Heart left ventricle (tissue), 16 donors: ENCODE measurements at regions of chr2 and their contacts with region 1.

Region 1: GRCh38 chr2:27370026-27370815 is at the starts of genes EIF2B4 and SNX17:
- DNase-seq: peak; percentile 99 to 100 (median 99)
- ATAC-seq: peak; percentile 95 to 97 (median 96)
- H3K4me3 ChIP-seq: peak within 1 kb of the TSS; percentile 84 to 100 (median 88)
- H3K27ac ChIP-seq: peak within 1 kb of the TSS; percentile 73 to 96 (median 92)
- H3K4me1 ChIP-seq: peaks cover 5 to 36% (median 30%) of the 10 kb centered on the region in 12 donors
- H3K27me3 ChIP-seq: no peaks in the 10 kb centered on the region
- CTCF ChIP-seq: peak; percentile 52 to 96 (median 82)
- POLR2A ChIP-seq: peak in 1 of 2 donors; percentile 62
- total RNA-seq, gene EIF2B4: 28.5 to 59.3 (median 37.0) TPM
- total RNA-seq, gene SNX17: 59.4 to 90.7 (median 77.2) TPM

Region 2: GRCh38 chr2:27322766-27323595 is 47.2 kb before region 1 on chr2 and contains the start of gene MPV17:
- intact Hi-C with region 1: loop called in 1 of 10 experiments (anchors 5 kb)
- DNase-seq: peak; percentile 93 to 96 (median 93)
- ATAC-seq: peak; percentile 83 to 95 (median 92)
- H3K4me3 ChIP-seq: peak within 1 kb of the TSS; percentile 62 to 95 (median 74)
- H3K27ac ChIP-seq: peak within 1 kb of the TSS; percentile 83 to 99 (median 92)
- H3K4me1 ChIP-seq: peaks cover 4 to 40% (median 23%) of the 10 kb centered on the region in 12 donors
- H3K27me3 ChIP-seq: no peaks in the 10 kb centered on the region
- CTCF ChIP-seq: no peak
- POLR2A ChIP-seq: peak; percentile 48 to 86
- total RNA-seq, gene MPV17: 48.8 to 103 (median 65.7) TPM

Region 3: DNA sequence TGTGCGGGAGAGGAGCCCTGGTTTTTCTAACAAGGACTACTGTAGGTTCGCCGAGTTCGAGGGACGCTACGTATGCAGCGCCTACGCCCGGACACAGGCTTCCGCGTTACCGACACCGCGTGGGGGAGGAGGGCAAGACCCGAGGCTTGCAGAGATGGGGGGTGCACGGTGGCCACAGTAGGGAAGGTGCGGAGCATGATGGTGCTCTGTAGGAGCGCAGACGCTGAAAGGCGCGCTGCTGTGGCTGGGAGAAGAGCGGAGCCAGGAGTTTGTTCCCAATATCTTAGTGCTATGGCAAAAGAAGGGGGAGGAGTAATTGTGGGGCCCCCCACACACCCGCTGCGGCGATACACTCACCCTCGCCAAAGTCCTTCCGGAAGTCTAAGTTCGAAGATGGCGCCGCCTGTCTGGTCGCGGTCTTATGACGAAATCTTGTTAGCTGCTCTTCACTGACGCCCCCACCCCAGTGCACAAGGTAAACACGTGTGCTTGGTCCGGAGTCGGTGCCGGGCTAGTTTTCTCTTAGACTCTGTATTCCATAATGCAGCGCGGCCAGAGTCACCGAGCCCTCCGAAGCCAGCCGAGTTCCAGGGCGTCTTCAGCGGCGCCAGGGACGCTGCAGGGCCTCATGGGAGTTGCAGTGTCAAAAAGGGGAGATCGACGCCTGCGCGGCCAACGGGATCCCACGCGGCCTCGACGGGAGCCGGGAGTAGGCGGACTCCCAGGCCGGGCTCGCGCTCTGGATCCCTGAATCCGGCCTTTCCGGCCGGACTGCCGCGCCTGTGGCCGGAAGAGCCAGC is 13.6 kb before region 1 on chr2 and contains the start of gene GTF3C2:
- intact Hi-C with region 1: loop called in 3 of 10 experiments (anchors 1 to 2 kb)
- DNase-seq: peak; percentile 95 to 97 (median 95)
- ATAC-seq: peak; percentile 97 to 98 (median 98)
- H3K4me3 ChIP-seq: peak within 1 kb of the TSS; percentile 61 to 97 (median 84)
- H3K27ac ChIP-seq: peak within 1 kb of the TSS; percentile 66 to 98 (median 88)
- H3K4me1 ChIP-seq: peaks cover 4 to 57% (median 27%) of the 10 kb centered on the region in 12 donors
- H3K27me3 ChIP-seq: no peaks in the 10 kb centered on the region
- CTCF ChIP-seq: peak in 2 of 12 donors; percentile 10 to 21
- POLR2A ChIP-seq: peak in 1 of 2 donors; percentile 44
- total RNA-seq, gene GTF3C2: 19.9 to 42.6 (median 28.3) TPM

Region 4: GRCh38 chr2:27380626-27381545 is 10.7 kb after region 1 on chr2 and contains the start of gene ZNF513:
- intact Hi-C with region 1: loop called in 1 of 10 experiments (anchors 1 kb)
- DNase-seq: peak; percentile 97 to 99 (median 98)
- ATAC-seq: peak; percentile 90 to 97 (median 91)
- H3K4me3 ChIP-seq: peak within 1 kb of the TSS; percentile 32 to 82 (median 73)
- H3K27ac ChIP-seq: peak within 1 kb of the TSS; percentile 79 to 96 (median 89)
- H3K4me1 ChIP-seq: peaks cover 0 to 36% (median 16%) of the 10 kb centered on the region in 12 donors
- H3K27me3 ChIP-seq: no peaks in the 10 kb centered on the region
- CTCF ChIP-seq: no peak
- POLR2A ChIP-seq: peak in 1 of 2 donors; percentile 69
- total RNA-seq, gene ZNF513: 2.8 to 10.4 (median 7.1) TPM

Region 5: GRCh38 chr2:27428213-27428977 is 58.2 kb after region 1 on chr2 and contains the start of gene NRBP1:
- intact Hi-C with region 1: loop called in 2 of 10 experiments (anchors 2 to 5 kb)
- DNase-seq: peak; percentile 92 to 98 (median 95)
- ATAC-seq: peak; percentile 96 to 98 (median 96)
- H3K4me3 ChIP-seq: peak within 1 kb of the TSS; percentile 60 to 100 (median 96)
- H3K27ac ChIP-seq: peak within 1 kb of the TSS; percentile 93 to 100 (median 98)
- H3K4me1 ChIP-seq: peaks cover 4 to 46% (median 31%) of the 10 kb centered on the region in 12 donors
- H3K27me3 ChIP-seq: no peaks in the 10 kb centered on the region
- CTCF ChIP-seq: peak in 1 of 12 donors; percentile 3
- POLR2A ChIP-seq: peak; percentile 4 to 91
- total RNA-seq, gene NRBP1: 43.5 to 78.6 (median 62.8) TPM